ENCODE measurements at regions of chr3 and their contacts with region 1.

Region 1: GRCh38 chr3:8416965-8417364 is 84.7 kb upstream of the LMCD1 start:
- DNase-seq: no peak

Region 2: GRCh38 chr3:8324740-8325139 is 92.2 kb before region 1 on chr3:
- intact Hi-C with region 1: loop called (anchors 5 to 10 kb)
- DNase-seq: peak; percentile 79